Calu3 (cell line): ENCODE measurements at regions of chr12 and their contacts with region 1.

Region 1: DNA sequence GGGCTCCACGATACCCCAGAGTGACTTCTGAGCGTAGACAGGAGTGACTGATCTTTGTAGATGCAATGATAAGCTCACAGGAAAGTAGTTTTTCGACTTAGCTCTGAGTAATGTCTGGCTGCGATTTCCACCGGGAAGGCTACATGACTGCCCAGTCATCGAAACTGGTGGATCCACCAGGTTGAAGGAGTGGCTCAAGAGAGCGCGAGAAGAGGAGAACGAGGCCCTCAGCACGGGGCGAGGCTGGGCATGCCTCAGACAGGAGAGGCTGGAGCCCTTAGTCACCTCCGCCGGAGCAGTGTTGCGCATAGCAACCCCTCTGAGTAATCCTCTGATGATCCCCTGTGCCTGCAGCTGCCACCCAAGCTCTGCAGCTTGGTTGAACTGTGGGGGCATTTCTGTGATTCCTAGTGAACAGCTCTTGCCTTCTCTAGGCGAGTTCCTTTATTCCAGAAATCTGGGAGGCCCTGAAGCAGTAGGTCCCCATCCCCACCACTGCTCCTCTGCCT is 25.6 kb downstream of the ELK3 start:
- DNase-seq: peak; percentile 94
- H3K4me3 Mint-ChIP-seq: peak overlapping the region; percentile 76
- H3K27ac Mint-ChIP-seq: peak overlapping the region; percentile 98
- H3K4me1 Mint-ChIP-seq: peaks cover 39% of the 10 kb centered on the region
- H3K27me3 Mint-ChIP-seq: no peaks in the 10 kb centered on the region
- CTCF ChIP-seq: no peak

Region 2: GRCh38 chr12:96007729-96008128 is 212.0 kb before region 1 on chr12:
- CTCF ChIA-PET with region 1: interaction called, 12 read pairs
- intact Hi-C with region 1: no loop called
- DNase-seq: no peak
- H3K4me3 Mint-ChIP-seq: no peak overlapping the region
- H3K27ac Mint-ChIP-seq: no peak overlapping the region
- H3K4me1 Mint-ChIP-seq: no peaks in the 10 kb centered on the region
- H3K27me3 Mint-ChIP-seq: no peaks in the 10 kb centered on the region
- CTCF ChIP-seq: no peak

Region 3: GRCh38 chr12:96047229-96048211 is 172.2 kb before region 1 on chr12:
- CTCF ChIA-PET with region 1: interaction called, 14 read pairs
- intact Hi-C with region 1: no loop called
- DNase-seq: peak; percentile 62
- H3K4me3 Mint-ChIP-seq: peak overlapping the region; percentile 60
- H3K27ac Mint-ChIP-seq: peak overlapping the region; percentile 94
- H3K4me1 Mint-ChIP-seq: peaks cover 65% of the 10 kb centered on the region
- H3K27me3 Mint-ChIP-seq: no peaks in the 10 kb centered on the region
- CTCF ChIP-seq: no peak

Region 4: GRCh38 chr12:96061864-96062453 is 157.8 kb before region 1 on chr12:
- CTCF ChIA-PET with region 1: interaction called, 8 read pairs
- intact Hi-C with region 1: loop called (anchors 1 kb)
- DNase-seq: peak; percentile 82
- H3K4me3 Mint-ChIP-seq: no peak overlapping the region
- H3K27ac Mint-ChIP-seq: no peak overlapping the region
- H3K4me1 Mint-ChIP-seq: no peaks in the 10 kb centered on the region
- H3K27me3 Mint-ChIP-seq: no peaks in the 10 kb centered on the region
- CTCF ChIP-seq: peak; percentile 72

Region 5: GRCh38 chr12:96070670-96071279 is 149.0 kb before region 1 on chr12:
- CTCF ChIA-PET with region 1: interaction called, 13 read pairs
- intact Hi-C with region 1: no loop called
- DNase-seq: no peak
- H3K4me3 Mint-ChIP-seq: no peak overlapping the region
- H3K27ac Mint-ChIP-seq: no peak overlapping the region
- H3K4me1 Mint-ChIP-seq: peaks cover 39% of the 10 kb centered on the region
- H3K27me3 Mint-ChIP-seq: no peaks in the 10 kb centered on the region
- CTCF ChIP-seq: no peak

Region 6: DNA sequence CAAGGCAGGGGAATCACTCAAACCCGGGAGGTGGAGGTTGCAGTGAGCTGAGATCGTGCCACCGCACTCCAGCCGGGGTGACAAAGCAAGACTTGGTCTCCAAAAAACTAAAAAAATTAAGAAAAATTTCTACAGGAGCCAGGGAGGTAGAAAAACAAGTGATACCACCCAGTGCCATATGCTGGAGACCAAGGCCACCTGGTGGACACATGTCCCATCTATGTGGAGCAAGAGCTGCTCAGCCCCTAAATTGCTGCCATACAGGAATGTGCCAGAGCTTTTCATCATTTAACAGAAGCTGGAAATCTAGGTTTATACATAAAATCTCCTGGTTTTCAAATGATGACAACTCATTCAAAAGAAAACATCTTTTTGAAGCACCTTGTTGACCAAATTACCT is 86.9 kb before region 1 on chr12:
- CTCF ChIA-PET with region 1: interaction called, 4 read pairs
- intact Hi-C with region 1: loop called (anchors 1 kb)
- DNase-seq: peak; percentile 61
- H3K4me3 Mint-ChIP-seq: no peak overlapping the region
- H3K27ac Mint-ChIP-seq: no peak overlapping the region
- H3K4me1 Mint-ChIP-seq: peaks cover 17% of the 10 kb centered on the region
- H3K27me3 Mint-ChIP-seq: peaks cover 26% of the 10 kb centered on the region
- CTCF ChIP-seq: peak; percentile 45

Region 7: DNA sequence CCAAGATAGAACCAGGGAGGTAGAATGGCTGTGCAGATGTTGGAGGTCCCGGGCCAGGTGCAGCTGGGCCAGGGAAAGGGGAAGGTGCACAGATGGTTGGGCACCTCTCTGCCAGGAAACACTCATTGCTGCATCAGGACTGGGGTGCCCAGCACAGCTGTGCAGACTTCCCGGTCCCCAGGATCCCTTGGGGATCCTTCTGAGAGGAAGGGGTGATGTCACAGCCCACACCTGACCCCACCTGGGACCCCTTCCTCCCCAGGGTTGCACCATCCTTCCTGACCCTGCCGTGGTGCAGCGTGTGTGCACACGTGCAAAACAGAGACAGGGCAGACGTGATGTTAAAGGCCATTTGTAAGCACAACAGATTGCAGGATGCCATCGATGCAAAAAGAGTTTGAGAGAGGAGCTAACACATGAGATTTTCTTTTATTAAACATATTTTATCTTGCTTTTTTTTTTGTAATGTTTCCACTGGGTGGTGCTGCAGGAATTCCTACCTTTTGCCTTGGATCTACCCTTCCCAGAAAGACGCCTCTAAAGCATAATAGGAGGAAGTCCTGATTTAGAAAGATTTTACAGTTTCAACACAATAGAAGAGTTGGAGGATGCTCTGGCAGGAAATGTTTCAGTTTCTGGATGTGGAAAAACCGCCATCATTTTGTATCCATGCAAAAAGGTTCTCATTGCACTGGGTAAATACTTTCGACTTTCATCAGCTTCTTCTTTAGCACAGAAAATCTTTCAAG is 10.8 kb before region 1 on chr12:
- CTCF ChIA-PET with region 1: no interaction called
- intact Hi-C with region 1: no loop called
- DNase-seq: no peak
- H3K4me3 Mint-ChIP-seq: no peak overlapping the region
- H3K27ac Mint-ChIP-seq: no peak overlapping the region
- H3K4me1 Mint-ChIP-seq: peaks cover 7% of the 10 kb centered on the region
- H3K27me3 Mint-ChIP-seq: no peaks in the 10 kb centered on the region
- CTCF ChIP-seq: no peak

Region 8: DNA sequence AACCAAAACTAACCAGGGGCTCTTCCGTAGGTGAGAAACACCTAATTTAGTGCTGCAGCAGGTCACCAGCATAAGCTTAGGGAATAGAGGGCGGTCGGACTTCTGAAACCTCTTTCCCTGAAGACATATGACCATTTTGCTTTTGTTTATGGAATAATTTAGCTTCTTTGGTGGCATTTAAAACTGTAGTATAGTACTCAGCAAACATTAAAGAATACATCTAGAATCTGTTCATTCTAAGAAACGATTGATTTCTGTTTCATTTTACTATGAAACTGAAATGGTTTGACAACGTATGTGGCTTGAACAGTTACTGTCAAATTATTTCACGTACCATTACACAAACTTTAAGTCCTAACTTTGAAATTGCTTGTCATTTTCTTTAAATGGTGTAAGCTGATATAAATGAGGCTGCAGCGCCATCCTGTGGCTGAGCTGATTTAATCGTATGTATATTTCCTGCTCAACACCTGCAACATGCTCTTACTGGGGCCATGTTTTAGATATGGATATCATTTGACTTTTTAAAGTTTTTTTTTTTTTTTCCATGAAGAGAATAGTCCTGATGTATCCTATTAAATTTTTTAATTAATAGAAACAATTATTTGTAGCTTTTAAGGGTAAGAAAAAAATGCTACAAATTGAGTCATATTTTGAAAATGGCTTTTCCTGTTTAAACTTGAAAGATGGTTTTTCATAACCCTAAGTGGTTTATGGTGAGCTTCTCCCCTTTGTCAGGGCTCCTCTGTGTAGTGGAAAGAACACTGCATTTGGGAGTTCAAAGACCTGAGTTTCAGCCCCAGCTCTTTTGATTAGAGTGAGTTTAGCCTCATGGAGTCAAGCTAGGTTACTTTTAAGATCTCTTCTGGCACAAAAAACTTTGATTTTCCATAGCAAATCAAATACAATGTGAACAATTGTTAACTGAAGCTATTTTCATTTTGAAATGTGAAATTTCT is 297.0 kb after region 1 on chr12:
- CTCF ChIA-PET with region 1: interaction called, 10 read pairs
- intact Hi-C with region 1: loop called (anchors 1 kb)
- DNase-seq: peak; percentile 75
- H3K4me3 Mint-ChIP-seq: no peak overlapping the region
- H3K27ac Mint-ChIP-seq: no peak overlapping the region
- H3K4me1 Mint-ChIP-seq: no peaks in the 10 kb centered on the region
- H3K27me3 Mint-ChIP-seq: no peaks in the 10 kb centered on the region
- CTCF ChIP-seq: peak; percentile 41